Dendritic cell treated with granulocyte-macrophage colony-stimulating factor and Interleukin-4, amounts not matched to agents 40 ng/mL and 50 ng/mL, for 4 days (primary cell): ENCODE measurements at regions of chr6 and their contacts with region 1.

Region 1: DNA sequence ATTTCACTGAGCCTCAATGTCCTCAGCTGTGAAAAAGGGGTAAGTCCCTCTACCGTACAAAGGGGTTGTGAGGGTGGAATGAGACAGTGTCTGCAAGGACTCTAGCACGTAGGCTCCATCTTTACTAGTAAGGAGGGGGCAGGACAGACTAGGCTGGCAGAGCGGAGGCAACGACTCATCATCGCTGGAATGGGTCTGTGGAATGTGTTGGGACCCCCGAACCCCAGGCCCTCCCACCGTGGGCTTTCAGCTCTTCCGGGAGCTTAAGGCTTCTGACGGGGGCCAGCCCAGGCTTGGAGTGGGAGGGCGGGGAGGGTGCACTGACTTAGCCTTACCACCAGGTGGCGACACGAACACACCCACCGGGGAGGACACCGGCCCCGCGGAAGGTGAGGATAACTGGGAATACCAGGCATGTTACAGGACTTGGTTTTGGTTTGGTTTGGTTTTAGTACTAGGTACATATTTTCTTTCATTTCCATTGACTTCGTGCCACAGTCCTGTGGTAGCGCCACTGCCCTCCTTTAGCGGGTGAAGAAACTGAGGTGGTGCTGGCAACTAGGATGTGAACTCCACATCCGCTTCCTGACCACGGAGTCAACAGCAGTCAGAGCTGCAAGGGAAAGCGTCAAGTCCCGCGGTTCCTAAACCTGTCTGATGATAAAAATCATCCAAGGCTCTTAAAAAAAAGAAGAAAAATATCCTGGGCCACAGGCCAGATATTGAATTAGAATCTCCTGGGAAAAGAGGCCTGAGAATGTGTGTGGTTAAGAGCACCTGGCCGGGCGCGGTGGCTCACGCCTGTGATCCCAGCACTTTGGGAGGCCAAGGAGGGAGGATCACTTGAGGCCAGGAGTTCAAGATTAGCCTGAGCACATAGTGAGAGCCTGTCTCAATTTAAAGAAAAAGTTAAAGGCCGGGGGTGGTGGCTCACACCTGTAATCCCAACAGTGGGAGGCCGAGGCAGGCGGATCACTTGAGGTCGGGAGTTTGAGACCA is 10.3 kb upstream of the TULP1 start:
- H3K4me3 Mint-ChIP-seq: peak overlapping the region; percentile 53
- H3K27ac Mint-ChIP-seq: no peak overlapping the region
- H3K4me1 Mint-ChIP-seq: no peaks in the 10 kb centered on the region
- H3K27me3 Mint-ChIP-seq: peaks cover 31% of the 10 kb centered on the region

Region 2: DNA sequence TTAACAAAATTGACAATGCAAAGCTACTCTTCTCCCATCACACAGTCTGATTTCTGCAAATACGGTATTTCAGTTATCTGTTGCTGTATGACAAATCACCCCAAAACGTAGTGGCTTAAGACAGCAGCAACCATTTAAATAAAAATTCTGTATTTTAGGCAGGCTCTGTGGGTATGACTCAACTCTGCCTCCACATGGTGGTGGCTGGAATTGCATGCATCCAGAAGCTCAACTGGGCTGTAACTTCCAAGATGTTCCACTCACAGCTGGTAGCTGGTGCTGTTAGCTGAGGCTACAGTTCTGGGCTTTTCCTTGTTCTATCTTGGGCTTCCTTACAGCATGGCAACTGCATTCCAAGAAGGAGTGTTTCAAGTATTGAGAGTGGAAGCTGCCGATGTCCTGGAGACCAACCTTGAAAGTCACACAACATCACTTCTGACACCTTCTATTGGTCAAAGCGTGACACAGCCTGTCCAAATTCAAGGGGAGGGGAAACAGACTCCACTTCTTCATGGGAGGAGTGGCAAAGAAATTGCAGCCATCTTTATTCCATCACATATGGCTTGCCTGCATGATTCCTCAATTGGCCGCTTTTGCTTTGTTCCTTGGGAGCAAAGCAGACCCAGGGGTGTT is 29.4 kb after region 1 on chr6:
- intact Hi-C with region 1: loop called (anchors 2 kb)
- H3K4me3 Mint-ChIP-seq: no peak overlapping the region
- H3K27ac Mint-ChIP-seq: no peak overlapping the region
- H3K4me1 Mint-ChIP-seq: peaks cover 9% of the 10 kb centered on the region
- H3K27me3 Mint-ChIP-seq: peaks cover 7% of the 10 kb centered on the region